Naive thymus-derived CD4-positive, alpha-beta T cell (primary cell): ENCODE measurements at regions of chr9 and their contacts with region 1.

Region 1: DNA sequence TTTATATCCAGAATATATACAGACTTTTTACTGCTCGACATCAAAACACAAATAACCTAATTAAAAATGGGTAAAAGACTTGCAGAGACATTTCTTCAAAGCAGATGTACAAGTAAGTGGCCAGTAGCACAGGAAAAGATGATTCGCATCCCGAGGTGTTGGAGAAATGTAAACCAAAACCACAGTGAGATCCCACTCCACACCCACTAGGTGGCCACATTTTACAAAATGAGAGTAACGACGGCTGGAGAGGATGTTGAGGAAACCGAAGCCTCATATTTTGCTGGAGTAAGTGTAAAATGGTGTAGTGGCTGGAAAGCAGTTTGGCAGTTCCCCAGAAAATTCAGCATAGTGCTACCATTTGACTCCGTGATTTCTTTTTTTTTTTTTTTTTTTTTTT is 21.2 kb upstream of the GBGT1 start:
- DNase-seq: peak in 8 of 9 donors; percentile 15 to 59 (median 38)
- ATAC-seq: peak; percentile 72
- H3K4me3 ChIP-seq: no peak overlapping the region
- H3K4me3 Mint-ChIP-seq: peak overlapping the region in 5 of 10 donors; percentile 2 to 47 (median 38)
- H3K27ac ChIP-seq: no peak overlapping the region
- H3K27ac Mint-ChIP-seq: peak overlapping the region in 1 of 9 donors; percentile 38
- H3K4me1 ChIP-seq: peaks cover 0 to 5% of the 10 kb centered on the region in 2 donors
- H3K4me1 Mint-ChIP-seq: peaks cover 8 to 18% (median 12%) of the 10 kb centered on the region in 7 donors
- H3K27me3 ChIP-seq: peaks cover 0 to 3% of the 10 kb centered on the region in 2 donors
- H3K27me3 Mint-ChIP-seq: peaks cover 12 to 52% (median 18%) of the 10 kb centered on the region in 5 donors

Region 2: GRCh38 chr9:133048569-133048968 is 136.4 kb before region 1 on chr9:
- CTCF ChIA-PET with region 1: interaction called, 3 read pairs
- POLR2A ChIA-PET with region 1: no interaction called
- intact Hi-C with region 1: loop called in 1 of 2 experiments (anchors 1 kb)
- DNase-seq: peak in 3 of 9 donors; percentile 15 to 40 (median 17)
- ATAC-seq: peak; percentile 63
- H3K4me3 ChIP-seq: no peak overlapping the region
- H3K4me3 Mint-ChIP-seq: no peak overlapping the region
- H3K27ac ChIP-seq: no peak overlapping the region
- H3K27ac Mint-ChIP-seq: no peak overlapping the region
- H3K4me1 ChIP-seq: no peaks in the 10 kb centered on the region
- H3K4me1 Mint-ChIP-seq: peaks cover 0 to 7% (median 2%) of the 10 kb centered on the region in 7 donors
- H3K27me3 ChIP-seq: no peaks in the 10 kb centered on the region
- H3K27me3 Mint-ChIP-seq: no peaks in the 10 kb centered on the region

Region 3: DNA sequence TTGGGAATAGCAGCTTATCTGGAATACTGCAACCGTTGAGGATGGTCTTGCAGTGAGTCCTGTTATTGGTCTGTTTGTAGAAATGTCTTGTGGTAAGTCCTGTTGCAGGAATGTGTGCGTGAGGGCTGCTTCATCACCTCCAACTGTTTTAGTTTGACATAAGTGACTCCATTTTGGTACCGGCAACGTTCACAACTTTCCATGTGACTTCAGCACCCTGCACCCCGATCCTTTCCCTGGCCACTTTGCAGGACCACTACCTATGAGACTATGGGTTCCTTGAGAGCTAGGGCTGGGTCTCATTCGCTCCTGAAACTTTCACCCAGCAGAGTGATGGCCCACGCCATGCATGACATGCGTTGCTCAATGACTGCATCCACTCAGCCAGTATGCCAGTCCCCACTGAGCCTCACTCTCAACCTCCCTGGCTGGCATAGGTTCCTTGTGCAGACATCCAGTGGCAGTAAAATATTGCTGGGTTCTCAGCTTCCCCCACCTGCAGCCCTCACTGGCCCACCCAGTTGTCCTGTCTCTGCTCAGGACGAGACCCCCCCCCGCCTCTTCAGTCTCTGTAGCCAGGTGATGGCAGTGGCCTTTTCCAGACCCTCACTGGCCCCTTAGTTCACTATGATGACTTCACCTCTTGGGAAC is 143.0 kb after region 1 on chr9:
- CTCF ChIA-PET with region 1: no interaction called
- POLR2A ChIA-PET with region 1: interaction called, 3 read pairs
- intact Hi-C with region 1: loop called (anchors 2 to 5 kb)
- DNase-seq: no peak
- ATAC-seq: no peak
- H3K4me3 ChIP-seq: no peak overlapping the region
- H3K4me3 Mint-ChIP-seq: no peak overlapping the region
- H3K27ac ChIP-seq: no peak overlapping the region
- H3K27ac Mint-ChIP-seq: peak overlapping the region in 6 of 9 donors; percentile 1 to 59 (median 23)
- H3K4me1 ChIP-seq: no peaks in the 10 kb centered on the region
- H3K4me1 Mint-ChIP-seq: peaks cover 2 to 24% (median 18%) of the 10 kb centered on the region in 7 donors
- H3K27me3 ChIP-seq: no peaks in the 10 kb centered on the region
- H3K27me3 Mint-ChIP-seq: no peaks in the 10 kb centered on the region

Region 4: DNA sequence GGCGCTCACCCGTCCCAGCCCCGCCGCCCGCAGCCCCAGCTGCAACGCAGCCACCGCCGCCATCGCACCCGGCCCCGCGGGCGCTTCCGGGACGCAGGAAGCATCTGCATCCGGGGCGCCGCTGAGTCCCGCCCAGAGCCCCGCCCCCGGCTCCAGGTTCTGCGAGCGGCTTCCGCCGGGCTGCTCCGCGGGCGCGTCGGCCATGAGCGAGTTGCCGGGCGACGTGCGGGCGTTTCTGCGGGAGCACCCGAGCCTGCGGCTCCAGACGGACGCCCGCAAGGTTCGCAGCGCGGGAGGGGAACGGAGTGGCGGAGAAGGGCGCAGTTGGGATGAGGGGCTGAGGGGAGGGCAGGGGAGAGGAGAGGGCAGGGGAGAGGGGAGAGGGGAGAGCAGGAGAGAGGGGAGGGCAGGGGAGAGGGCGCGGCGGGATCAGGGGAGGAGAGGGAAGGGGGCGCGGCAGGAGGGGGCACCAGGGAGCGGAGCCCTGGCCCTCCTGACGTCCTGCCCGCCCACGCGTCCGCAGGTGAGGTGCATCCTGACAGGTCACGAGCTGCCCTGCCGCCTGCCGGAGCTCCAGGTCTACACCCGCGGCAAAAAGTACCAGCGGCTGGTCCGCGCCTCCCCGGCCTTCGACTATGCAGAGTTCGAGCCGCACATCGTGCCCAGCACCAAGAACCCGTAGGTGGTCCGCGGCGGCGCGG is 171.6 kb after region 1 on chr9 and contains the starts of genes SURF1 and SURF2:
- CTCF ChIA-PET with region 1: interaction called, 7 read pairs
- POLR2A ChIA-PET with region 1: no interaction called
- intact Hi-C with region 1: loop called in 1 of 2 experiments (anchors 5 kb)
- DNase-seq: peak; percentile 77 to 92 (median 87)
- ATAC-seq: peak; percentile 96
- H3K4me3 ChIP-seq: peak within 1 kb of the TSS; percentile 64
- H3K4me3 Mint-ChIP-seq: peak within 1 kb of the TSS; percentile 80 to 94 (median 89)
- H3K27ac ChIP-seq: peak within 1 kb of the TSS; percentile 91
- H3K27ac Mint-ChIP-seq: peak within 1 kb of the TSS; percentile 72 to 91 (median 84)
- H3K4me1 ChIP-seq: peaks cover 12 to 28% of the 10 kb centered on the region in 2 donors
- H3K4me1 Mint-ChIP-seq: peaks cover 20 to 42% (median 28%) of the 10 kb centered on the region in 7 donors
- H3K27me3 ChIP-seq: no peaks in the 10 kb centered on the region
- H3K27me3 Mint-ChIP-seq: no peaks in the 10 kb centered on the region
- total RNA-seq, gene SURF1: 40.5 to 53.5 (median 47.9) TPM
- total RNA-seq, gene SURF2: 15.0 to 23.5 (median 15.6) TPM

Region 5: DNA sequence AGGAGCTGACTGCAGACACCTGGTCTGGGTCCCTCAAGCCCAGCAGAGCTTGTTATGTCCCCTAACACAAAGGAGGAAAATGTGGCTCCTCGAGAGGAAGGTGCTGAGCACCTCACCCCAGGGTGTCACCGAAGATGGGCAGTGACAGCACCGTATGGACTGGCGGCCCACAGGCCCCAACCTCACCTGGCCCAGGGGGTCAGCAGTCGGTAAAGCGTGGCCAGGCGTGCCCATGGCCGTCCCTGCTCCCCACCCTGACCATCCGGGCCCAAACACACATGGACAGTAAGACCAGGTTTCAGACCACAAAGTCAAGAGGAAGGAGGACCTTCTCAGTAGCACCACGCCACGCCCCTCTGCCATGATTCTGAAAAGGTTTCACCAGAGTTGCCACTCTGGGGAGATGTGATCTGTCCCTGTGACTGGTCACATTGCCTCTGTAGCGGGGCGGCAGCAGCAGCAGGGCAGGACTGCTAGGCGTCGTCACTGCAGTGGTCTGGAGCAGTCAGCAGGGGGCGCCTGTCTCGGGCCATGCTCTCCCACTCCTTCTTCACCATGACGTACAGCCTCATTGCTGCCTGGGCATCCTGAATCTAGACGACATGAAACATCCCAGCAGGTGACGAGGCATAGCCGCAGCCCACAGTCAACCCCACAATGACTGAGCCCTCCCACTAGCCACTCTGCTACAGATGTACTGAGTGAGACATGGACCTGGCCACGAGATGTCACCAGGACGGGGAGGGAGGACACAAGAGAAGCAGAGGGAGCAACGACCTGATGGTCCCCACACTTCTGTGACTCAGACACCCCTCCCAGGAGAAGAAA is 221.7 kb after region 1 on chr9:
- CTCF ChIA-PET with region 1: interaction called, 19 read pairs
- POLR2A ChIA-PET with region 1: no interaction called
- intact Hi-C with region 1: loop called in 1 of 2 experiments (anchors 1 kb)
- DNase-seq: peak; percentile 59 to 78 (median 71)
- ATAC-seq: peak; percentile 94
- H3K4me3 ChIP-seq: no peak overlapping the region
- H3K4me3 Mint-ChIP-seq: no peak overlapping the region
- H3K27ac ChIP-seq: no peak overlapping the region
- H3K27ac Mint-ChIP-seq: peak overlapping the region in 7 of 9 donors; percentile 1 to 86 (median 51)
- H3K4me1 ChIP-seq: no peaks in the 10 kb centered on the region
- H3K4me1 Mint-ChIP-seq: peaks cover 2 to 14% (median 10%) of the 10 kb centered on the region in 7 donors
- H3K27me3 ChIP-seq: no peaks in the 10 kb centered on the region
- H3K27me3 Mint-ChIP-seq: no peaks in the 10 kb centered on the region

Region 6: DNA sequence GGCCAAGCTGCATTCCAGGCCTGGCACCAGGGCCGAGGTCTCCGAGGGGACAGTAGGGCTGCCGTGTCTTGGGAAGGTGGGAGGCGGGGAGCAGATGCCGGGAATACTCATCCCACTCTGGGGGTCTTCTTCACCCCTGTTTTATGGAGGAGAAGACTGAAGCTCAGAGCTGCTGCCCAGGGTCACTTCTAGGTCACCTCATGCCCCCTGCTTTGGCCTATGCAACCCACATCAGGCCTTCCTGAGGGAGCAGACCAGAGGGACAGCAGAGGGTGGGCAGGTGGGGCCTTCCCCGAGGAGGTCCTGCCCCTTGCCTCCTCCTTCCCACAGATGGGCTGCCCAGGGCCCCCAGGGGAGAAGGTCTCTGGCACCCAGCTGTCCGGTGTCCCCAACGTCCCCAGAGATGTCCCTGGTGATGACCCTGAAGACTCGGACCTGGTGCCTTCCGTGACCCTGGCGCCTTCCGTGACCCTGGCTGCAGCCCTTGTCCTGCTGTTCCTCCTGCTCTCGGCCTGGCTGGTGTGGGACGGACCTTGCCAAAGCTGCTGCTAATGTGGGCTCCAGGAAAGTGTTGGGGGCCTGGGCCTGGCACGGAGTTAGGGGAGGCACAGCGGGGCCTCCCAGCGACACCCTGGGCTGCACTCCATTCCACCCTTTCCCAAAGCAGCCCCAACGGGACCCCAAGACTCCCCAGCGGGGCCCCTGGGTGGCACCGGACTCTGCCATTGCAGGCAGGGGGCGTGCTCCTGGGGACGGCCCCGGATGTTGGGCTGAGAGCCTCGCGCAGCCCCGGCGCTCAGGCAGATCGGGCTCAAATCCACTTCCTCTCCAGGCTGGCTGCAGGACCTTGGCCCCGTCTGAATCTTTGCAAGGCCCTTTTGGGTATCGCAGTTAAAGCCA is 300.6 kb after region 1 on chr9:
- CTCF ChIA-PET with region 1: interaction called, 33 read pairs
- POLR2A ChIA-PET with region 1: interaction called, 3 read pairs
- intact Hi-C with region 1: loop called (anchors 1 kb)
- DNase-seq: no peak
- ATAC-seq: no peak
- H3K4me3 ChIP-seq: no peak overlapping the region
- H3K4me3 Mint-ChIP-seq: peak overlapping the region in 3 of 10 donors; percentile 14 to 49 (median 35)
- H3K27ac ChIP-seq: no peak overlapping the region
- H3K27ac Mint-ChIP-seq: peak overlapping the region in 1 of 9 donors; percentile 50
- H3K4me1 ChIP-seq: peaks cover 3 to 5% of the 10 kb centered on the region in 2 donors
- H3K4me1 Mint-ChIP-seq: peaks cover 0 to 7% (median 6%) of the 10 kb centered on the region in 7 donors
- H3K27me3 ChIP-seq: no peaks in the 10 kb centered on the region
- H3K27me3 Mint-ChIP-seq: peaks cover 0 to 6% (median 0%) of the 10 kb centered on the region in 5 donors